ENCODE measurements at regions of chr19 and their contacts with region 1.

Region 1: DNA sequence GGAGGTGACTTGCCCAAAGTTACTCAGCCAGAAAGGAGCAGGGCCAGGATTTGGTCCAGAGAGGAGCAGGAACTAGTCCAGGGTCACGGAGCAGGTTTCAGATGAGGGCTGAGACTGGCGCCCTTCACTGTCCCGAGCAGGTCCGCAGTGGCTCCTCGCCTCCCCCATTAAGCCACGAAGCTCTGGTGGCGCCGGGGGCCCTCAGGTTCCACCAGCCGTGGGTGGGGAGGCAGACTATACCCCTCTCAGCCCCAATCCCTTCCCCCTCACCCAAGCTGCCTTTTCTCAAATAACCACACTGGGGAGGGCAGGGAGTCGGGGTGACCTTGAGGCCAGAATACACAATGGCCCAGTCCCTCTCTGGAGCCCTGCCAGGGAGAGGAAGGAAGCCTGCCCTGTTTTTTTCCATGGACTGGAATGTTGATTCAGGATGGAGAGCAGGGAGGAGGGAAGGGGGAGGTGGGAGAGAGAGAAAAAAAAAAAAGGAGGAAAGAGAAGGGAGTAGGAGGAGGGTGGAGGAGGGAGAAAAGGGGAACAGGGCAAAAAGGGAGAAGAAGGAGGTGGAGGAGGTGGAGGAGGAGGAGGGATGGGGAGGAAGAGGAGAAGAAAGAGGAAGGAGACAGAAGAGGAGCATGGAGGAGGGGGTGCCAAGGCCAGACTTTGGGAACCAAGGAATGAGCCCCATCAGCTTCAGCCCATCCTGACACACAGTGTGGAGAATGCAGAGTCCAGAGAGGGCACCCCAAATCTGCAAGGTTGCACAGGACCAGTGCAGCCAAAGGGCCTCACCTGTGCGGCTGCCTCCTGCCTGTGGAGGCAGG is 19.7 kb downstream of the CEACAM16 start:
- DNase-seq: no peak
- H3K4me3 ChIP-seq: no peak overlapping the region
- CTCF ChIP-seq: no peak

Region 2: DNA sequence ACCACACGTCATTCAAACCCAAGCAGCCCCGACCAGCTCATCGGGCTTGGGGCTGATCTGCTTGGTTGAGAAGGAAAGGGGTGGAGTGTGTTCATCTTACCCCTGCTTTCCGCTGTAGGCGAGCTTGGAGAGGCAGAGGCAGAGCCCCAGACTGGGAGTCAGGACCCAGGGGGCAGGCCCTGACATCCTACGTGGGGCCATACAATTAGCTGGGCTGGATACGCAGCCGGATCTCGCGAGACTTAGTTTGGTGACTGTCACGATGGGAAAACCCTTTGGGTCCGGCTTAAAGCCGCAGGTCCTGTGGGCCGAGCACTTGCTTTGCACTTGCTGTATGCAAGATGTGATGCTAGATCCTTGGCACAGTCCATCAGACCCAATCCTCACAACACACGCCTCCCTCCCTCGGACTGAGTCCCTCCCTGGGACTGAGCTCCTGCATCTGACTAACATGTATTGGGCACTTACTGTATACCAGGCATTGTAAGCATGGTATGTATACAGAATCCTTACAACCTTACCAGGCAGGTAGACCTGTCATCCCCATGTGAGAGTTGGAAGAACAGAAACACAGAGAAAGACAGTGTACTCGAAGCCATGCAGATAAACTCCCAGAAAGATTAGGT is 16.0 kb before region 1 on chr19:
- CTCF ChIA-PET with region 1: interaction called, 16 read pairs
- POLR2A ChIA-PET with region 1: interaction called, 4 read pairs
- DNase-seq: no peak
- H3K4me3 ChIP-seq: no peak overlapping the region
- CTCF ChIP-seq: no peak